GM12878 (cell line): ENCODE measurements at regions of chrX and their contacts with region 1.

Region 1: GRCh38 chrX:66728818-66729271 is 90.0 kb upstream of the EDA2R start:
- DNase-seq: no peak
- ATAC-seq: peak; percentile 69
- H3K4me3 ChIP-seq: no peak overlapping the region
- H3K27ac ChIP-seq: no peak overlapping the region
- H3K4me1 ChIP-seq: no peaks in the 10 kb centered on the region
- H3K27me3 ChIP-seq: no peaks in the 10 kb centered on the region
- CTCF ChIP-seq: peak; percentile 42 to 59 (median 55); a peak in 5 of 6 replicates
- EP300 ChIP-seq: no peak
- POLR2A ChIP-seq: no peak
- RAD21 ChIP-seq: peak; percentile 58

Region 2: DNA sequence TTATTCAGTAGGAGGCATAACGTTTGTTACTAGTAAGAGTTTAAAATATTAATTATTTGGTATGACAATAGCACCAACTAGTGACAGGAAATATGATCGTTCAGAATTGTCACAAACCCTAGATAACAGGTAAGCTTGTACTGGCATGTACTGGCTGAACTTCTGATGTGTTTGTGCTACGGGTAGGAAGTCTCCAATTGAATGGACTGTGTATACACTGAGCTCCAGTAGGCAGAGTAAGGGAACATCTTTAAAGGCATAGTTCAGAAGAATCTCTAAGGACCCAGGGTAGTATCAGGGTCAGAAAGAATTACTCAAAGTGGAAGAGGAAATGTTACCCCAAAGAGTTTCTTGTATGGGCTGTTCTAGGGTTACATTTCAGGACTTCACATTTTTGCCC is 320.3 kb before region 1 on chrX:
- CTCF ChIA-PET with region 1: interaction called, 5 read pairs
- POLR2A ChIA-PET with region 1: no interaction called
- RAD21 ChIA-PET with region 1: interaction called, 3 read pairs
- SMC1A ChIA-PET with region 1: interaction called, 5 read pairs
- in situ Hi-C with region 1: no loop called
- intact Hi-C with region 1: loop called (anchors 5 kb)
- DNase-seq: peak; percentile 11
- ATAC-seq: peak; percentile 79
- H3K4me3 ChIP-seq: no peak overlapping the region
- H3K27ac ChIP-seq: no peak overlapping the region
- H3K4me1 ChIP-seq: no peaks in the 10 kb centered on the region
- H3K27me3 ChIP-seq: no peaks in the 10 kb centered on the region
- CTCF ChIP-seq: peak; percentile 46 to 56 (median 49); a peak in 4 of 6 replicates
- EP300 ChIP-seq: no peak
- POLR2A ChIP-seq: no peak
- RAD21 ChIP-seq: peak; percentile 57

Region 3: DNA sequence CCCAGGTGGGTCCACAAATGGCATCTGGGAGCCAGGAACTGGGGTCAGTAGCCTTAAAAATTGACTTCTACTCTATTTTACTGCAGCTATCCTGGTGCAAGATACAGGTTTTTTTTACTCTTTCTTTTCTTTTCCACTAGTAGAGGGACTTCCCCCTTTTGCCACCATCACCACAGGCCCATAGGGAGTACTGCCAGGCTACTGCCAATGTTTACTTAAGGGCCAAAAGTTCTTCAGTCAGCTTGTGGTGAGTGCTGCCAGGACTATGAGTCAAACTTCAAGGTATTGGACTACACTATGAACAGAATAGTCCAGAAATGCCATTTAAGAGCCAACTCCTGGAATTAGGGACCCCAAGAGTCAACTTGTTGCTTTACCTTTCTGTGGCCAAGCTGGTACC is 184.7 kb before region 1 on chrX:
- CTCF ChIA-PET with region 1: no interaction called
- POLR2A ChIA-PET with region 1: no interaction called
- RAD21 ChIA-PET with region 1: no interaction called
- SMC1A ChIA-PET with region 1: no interaction called
- in situ Hi-C with region 1: no loop called
- intact Hi-C with region 1: no loop called
- DNase-seq: no peak
- ATAC-seq: no peak
- H3K4me3 ChIP-seq: no peak overlapping the region
- H3K27ac ChIP-seq: no peak overlapping the region
- H3K4me1 ChIP-seq: no peaks in the 10 kb centered on the region
- H3K27me3 ChIP-seq: no peaks in the 10 kb centered on the region
- CTCF ChIP-seq: no peak
- EP300 ChIP-seq: no peak
- POLR2A ChIP-seq: no peak
- RAD21 ChIP-seq: no peak

Region 4: GRCh38 chrX:66602381-66602938 is 126.4 kb before region 1 on chrX:
- CTCF ChIA-PET with region 1: no interaction called
- POLR2A ChIA-PET with region 1: no interaction called
- RAD21 ChIA-PET with region 1: no interaction called
- SMC1A ChIA-PET with region 1: no interaction called
- in situ Hi-C with region 1: no loop called
- intact Hi-C with region 1: loop called (anchors 5 kb)
- DNase-seq: no peak
- ATAC-seq: peak; percentile 69
- H3K4me3 ChIP-seq: no peak overlapping the region
- H3K27ac ChIP-seq: no peak overlapping the region
- H3K4me1 ChIP-seq: no peaks in the 10 kb centered on the region; the same call in 1 of the 2 replicates
- H3K27me3 ChIP-seq: no peaks in the 10 kb centered on the region
- CTCF ChIP-seq: no peak
- EP300 ChIP-seq: no peak
- POLR2A ChIP-seq: no peak
- RAD21 ChIP-seq: no peak